Activated CD4-positive, alpha-beta memory T cell treated with anti-CD3 and anti-CD28 coated beads, Interleukin-2, amount 10 ng/mL, durations not matched to agents 7 days and 5 days (primary cell): ENCODE measurements at regions of chr11 and their contacts with region 1.

Region 1: DNA sequence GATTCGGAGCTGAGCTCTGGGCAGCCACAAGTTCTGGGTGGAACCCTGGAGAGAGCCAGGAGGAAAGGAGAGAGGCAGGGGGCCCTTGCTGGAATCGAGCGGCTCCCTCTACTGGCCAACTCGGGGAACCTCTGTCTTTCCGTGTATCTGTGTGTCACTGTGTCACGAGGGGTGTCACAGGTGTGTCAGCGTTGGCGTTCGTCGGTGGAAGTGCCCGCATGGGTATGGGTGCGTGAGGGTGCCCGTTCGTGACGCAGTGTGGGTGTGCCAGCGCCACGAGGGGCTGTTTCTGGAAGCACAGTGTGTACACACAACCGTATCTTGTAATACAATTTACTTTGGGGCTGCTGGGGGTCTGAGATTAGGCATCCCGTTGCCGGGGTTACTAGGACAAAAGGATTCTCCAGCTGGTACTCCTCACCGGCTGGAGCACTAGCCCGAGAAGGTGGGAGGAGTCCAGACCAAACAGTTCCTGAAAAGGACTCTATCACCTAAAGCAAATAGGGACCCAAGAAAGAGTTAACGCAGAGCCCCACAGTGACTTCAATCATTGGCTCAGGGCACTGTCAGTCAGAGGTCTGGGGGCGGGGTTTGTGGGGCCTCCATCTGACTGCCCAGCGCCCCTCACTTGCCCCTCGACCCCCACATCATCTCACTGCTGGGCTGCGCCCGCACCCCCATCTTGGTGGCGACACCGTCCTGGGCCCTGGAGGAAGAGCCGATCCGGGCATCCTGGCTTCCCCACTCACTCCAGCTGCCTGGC is 2.6 kb upstream of the BCL9L start:
- DNase-seq: peak; percentile 91
- H3K4me3 Mint-ChIP-seq: peak overlapping the region; percentile 89
- H3K27ac Mint-ChIP-seq: peak overlapping the region; percentile 92
- H3K4me1 Mint-ChIP-seq: peaks cover 48% of the 10 kb centered on the region
- H3K27me3 Mint-ChIP-seq: peaks cover 2% of the 10 kb centered on the region

Region 2: DNA sequence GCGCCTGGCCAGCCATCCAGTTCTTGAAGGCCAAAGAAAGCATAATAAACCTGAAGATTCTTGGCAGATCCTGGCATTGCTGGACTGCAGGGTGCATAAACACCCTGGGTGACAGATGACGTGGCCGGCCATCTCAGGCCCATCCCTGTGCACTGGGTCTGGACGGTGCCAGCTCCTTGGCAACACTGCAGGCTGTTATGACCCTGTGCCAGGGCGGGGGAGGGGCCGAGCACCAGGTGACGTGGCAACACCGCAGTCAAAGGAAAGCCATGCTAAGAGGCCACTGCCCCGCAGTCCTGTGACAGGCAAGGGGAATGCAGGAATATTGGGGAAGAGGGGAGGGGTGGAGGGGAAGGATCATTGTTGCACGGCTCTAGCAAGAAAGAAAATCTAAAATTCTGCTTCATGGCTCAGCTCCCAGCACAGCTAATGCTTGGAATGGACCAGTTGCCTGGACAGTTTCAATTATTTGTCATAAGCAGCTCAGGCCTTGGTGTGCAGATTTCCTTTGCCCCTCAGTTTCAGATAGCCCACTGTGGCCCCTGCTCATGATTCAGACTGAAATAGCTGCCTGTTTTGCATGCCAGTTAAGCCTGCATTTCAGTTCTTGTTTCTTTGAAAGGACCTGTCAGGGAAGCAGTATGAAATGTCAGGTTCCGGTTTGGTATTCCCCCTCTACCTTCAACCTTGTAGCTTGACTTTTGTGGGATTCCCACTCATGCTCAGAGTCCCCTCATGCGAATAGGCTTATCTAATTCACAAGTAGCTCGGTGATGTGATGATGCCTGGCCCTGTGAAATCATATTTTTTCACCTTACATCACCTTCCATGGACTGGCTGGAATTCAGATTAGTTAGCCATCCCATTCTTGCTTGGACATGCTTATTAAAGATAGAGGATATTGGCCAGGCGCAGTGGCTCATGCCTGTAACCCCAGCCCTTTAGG is 107.6 kb before region 1 on chr11:
- CTCF ChIA-PET with region 1: no interaction called
- POLR2A ChIA-PET with region 1: no interaction called
- DNase-seq: peak; percentile 18
- H3K4me3 Mint-ChIP-seq: no peak overlapping the region
- H3K27ac Mint-ChIP-seq: no peak overlapping the region
- H3K4me1 Mint-ChIP-seq: peaks cover 11% of the 10 kb centered on the region
- H3K27me3 Mint-ChIP-seq: no peaks in the 10 kb centered on the region

Region 3: DNA sequence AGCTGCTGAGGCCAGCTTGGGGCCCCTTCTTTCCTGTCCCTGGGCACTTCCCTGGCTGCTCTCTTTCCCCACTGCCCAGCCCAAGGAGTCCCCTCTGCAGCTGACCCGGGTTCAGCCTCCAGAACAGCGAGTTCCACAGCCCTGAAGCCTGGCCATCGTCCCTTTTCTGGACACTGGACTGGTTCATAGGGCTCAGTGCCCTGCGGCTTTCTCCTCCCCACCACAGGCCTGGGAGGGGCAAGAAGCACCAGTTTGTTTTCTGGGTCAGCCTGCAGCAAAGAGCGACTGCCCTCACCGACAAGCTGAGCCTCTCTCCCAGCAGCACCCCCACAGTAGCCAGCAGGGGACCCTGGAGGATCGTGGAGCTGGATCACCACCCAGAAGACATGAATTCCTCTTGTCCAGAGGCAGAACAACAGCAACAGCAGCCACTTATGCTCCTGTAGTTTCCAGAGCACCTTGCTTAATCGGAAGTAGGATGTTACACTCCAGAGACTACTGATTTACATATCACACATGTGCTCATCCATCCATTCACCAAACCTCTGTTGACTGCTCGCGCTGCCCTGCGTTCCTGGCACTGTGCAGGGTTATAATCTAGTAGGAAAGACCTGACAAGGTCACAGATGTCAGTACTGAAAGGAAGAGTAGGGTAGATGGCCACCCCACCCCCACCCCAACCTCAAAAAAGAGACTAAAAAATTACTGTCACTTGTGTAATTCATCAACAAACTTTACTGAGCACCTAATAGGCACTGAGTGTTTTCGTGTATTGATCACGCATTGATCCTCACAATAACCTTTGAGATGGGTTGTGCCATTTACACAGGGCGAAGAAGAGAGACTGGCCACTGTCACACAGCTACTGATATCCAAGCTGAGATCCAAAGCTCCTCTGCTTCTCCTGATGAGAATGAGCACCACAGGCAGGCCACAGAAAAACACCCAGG is 57.6 kb before region 1 on chr11:
- CTCF ChIA-PET with region 1: interaction called, 12 read pairs
- POLR2A ChIA-PET with region 1: interaction called, 15 read pairs
- DNase-seq: peak; percentile 42
- H3K4me3 Mint-ChIP-seq: peak overlapping the region; percentile 68
- H3K27ac Mint-ChIP-seq: peak overlapping the region; percentile 97
- H3K4me1 Mint-ChIP-seq: peaks cover 55% of the 10 kb centered on the region
- H3K27me3 Mint-ChIP-seq: no peaks in the 10 kb centered on the region

Region 4: DNA sequence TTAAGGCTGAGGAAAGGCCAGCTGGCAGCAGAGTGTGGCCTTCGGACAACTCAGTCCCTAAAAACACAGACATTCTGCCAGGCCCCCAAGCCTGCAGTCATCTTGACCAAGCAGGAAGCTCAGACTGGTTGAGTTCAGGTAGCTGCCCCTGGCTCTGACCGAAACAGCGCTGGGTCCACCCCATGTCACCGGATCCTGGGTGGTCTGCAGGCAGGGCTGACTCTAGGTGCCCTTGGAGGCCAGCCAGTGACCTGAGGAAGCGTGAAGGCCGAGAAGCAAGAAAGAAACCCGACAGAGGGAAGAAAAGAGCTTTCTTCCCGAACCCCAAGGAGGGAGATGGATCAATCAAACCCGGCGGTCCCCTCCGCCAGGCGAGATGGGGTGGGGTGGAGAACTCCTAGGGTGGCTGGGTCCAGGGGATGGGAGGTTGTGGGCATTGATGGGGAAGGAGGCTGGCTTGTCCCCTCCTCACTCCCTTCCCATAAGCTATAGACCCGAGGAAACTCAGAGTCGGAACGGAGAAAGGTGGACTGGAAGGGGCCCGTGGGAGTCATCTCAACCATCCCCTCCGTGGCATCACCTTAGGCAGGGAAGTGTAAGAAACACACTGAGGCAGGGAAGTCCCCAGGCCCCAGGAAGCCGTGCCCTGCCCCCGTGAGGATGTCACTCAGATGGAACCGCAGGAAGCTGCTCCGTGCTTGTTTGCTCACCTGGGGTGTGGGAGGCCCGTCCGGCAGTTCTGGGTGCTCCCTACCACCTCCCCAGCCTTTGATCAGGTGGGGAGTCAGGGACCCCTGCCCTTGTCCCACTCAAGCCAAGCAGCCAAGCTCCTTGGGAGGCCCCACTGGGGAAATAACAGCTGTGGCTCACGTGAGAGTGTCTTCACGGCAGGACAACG is 32.9 kb before region 1 on chr11:
- CTCF ChIA-PET with region 1: interaction called, 8 read pairs
- POLR2A ChIA-PET with region 1: interaction called, 16 read pairs
- DNase-seq: peak; percentile 70
- H3K4me3 Mint-ChIP-seq: peak overlapping the region; percentile 3
- H3K27ac Mint-ChIP-seq: peak overlapping the region; percentile 40
- H3K4me1 Mint-ChIP-seq: peaks cover 55% of the 10 kb centered on the region
- H3K27me3 Mint-ChIP-seq: no peaks in the 10 kb centered on the region

Region 5: GRCh38 chr11:118939953-118940598 is 11.8 kb after region 1 on chr11:
- CTCF ChIA-PET with region 1: interaction called, 21 read pairs
- POLR2A ChIA-PET with region 1: interaction called, 15 read pairs
- DNase-seq: peak; percentile 61
- H3K4me3 Mint-ChIP-seq: no peak overlapping the region
- H3K27ac Mint-ChIP-seq: no peak overlapping the region
- H3K4me1 Mint-ChIP-seq: peaks cover 36% of the 10 kb centered on the region
- H3K27me3 Mint-ChIP-seq: peaks cover 14% of the 10 kb centered on the region

Region 6: GRCh38 chr11:119065369-119065768 is 137.1 kb after region 1 on chr11:
- CTCF ChIA-PET with region 1: no interaction called
- POLR2A ChIA-PET with region 1: no interaction called
- DNase-seq: peak; percentile 65
- H3K4me3 Mint-ChIP-seq: peak overlapping the region; percentile 17
- H3K27ac Mint-ChIP-seq: peak overlapping the region; percentile 28
- H3K4me1 Mint-ChIP-seq: peaks cover 41% of the 10 kb centered on the region
- H3K27me3 Mint-ChIP-seq: no peaks in the 10 kb centered on the region

Region 7: GRCh38 chr11:119155733-119156492 is 227.6 kb after region 1 on chr11:
- CTCF ChIA-PET with region 1: no interaction called
- POLR2A ChIA-PET with region 1: no interaction called
- DNase-seq: no peak
- H3K4me3 Mint-ChIP-seq: no peak overlapping the region
- H3K27ac Mint-ChIP-seq: no peak overlapping the region
- H3K4me1 Mint-ChIP-seq: no peaks in the 10 kb centered on the region
- H3K27me3 Mint-ChIP-seq: peaks cover 20% of the 10 kb centered on the region